Left lung (tissue), 14 donors: ENCODE measurements at regions of chr15 and their contacts with region 1.

Region 1: GRCh38 chr15:53448232-53449001 is 311.0 kb downstream of the WDR72 start:
- DNase-seq: no peak
- ATAC-seq: no peak
- H3K4me3 ChIP-seq: no peak overlapping the region
- H3K27ac ChIP-seq: no peak overlapping the region
- H3K4me1 ChIP-seq: no peaks in the 10 kb centered on the region
- H3K27me3 ChIP-seq: no peaks in the 10 kb centered on the region
- CTCF ChIP-seq: no peak

Region 2: DNA sequence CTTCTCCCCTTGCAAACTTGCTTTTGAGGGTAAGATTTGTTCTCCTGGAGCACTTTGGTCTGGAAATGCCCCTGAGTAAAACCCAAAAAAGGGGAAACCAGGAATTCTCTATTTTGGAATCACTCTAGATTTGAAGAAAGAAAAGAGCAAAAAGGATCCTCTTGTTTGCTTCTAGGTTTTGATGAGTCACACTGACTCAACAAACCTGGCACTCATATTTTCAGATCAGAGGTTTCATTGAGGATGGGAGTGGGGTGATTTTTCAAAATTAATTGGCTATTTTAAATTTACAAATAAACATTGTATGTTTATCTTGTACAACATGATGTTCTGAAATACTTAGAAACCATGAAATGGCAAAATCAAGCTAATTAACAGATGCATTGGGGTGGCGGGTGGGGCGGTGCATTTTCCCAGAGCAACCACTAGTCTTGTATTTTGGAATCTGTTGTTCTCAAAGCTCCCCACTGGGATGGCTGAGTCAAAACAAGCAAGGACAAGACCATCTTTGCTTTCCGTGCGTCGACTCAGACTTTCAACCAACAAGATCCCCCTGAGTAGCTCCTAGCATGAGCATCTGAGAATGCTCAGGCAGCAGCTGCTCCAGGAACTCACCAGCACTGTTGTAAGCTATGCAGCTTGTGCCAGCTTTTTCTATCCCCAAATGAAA is 140.3 kb before region 1 on chr15:
- intact Hi-C with region 1: no loop called
- DNase-seq: no peak
- ATAC-seq: no peak
- H3K4me3 ChIP-seq: no peak overlapping the region
- H3K27ac ChIP-seq: no peak overlapping the region
- H3K4me1 ChIP-seq: no peaks in the 10 kb centered on the region
- H3K27me3 ChIP-seq: no peaks in the 10 kb centered on the region
- CTCF ChIP-seq: no peak

Region 3: DNA sequence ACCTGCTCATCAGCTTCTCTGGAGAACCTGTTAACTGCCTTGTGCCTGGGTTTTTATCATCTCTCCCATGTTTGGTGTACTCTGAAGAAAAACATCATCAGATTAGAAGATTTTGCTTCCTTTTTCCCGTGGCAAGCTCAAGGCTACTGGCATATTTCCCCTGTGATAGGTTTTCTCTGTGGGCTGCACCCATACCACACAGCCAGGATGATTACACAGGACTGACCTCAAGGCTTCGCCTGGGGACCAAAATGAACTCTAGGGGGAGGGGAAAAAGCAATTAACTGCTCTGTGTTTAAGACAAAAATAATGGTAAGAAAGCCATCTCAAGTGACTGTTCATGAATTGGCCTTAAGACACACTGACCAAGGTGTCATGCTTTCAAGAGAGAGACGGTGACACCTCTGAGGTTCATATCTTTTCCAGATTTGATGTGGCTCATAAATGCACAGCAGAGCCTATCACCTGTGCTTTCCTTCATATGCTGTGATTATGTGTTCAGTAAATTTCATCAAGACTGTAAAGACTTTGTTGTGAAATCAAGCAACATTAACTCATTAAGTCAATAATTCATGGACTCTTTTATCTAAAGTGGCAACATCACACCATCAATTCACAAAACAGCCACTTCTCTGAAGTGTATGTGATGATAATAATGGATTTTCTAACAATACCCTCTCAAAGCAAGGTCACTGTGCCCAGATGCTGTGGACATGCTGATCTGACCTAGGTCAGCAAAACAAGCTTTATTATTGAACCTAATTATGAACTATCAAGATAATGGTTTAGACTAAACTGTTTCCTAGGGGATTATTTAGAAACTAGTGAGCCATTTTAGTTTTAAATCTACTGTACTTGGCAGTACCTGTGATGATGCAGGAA is 116.8 kb before region 1 on chr15:
- intact Hi-C with region 1: no loop called
- DNase-seq: no peak
- ATAC-seq: no peak
- H3K4me3 ChIP-seq: no peak overlapping the region
- H3K27ac ChIP-seq: no peak overlapping the region
- H3K4me1 ChIP-seq: no peaks in the 10 kb centered on the region
- H3K27me3 ChIP-seq: no peaks in the 10 kb centered on the region
- CTCF ChIP-seq: no peak

Region 4: DNA sequence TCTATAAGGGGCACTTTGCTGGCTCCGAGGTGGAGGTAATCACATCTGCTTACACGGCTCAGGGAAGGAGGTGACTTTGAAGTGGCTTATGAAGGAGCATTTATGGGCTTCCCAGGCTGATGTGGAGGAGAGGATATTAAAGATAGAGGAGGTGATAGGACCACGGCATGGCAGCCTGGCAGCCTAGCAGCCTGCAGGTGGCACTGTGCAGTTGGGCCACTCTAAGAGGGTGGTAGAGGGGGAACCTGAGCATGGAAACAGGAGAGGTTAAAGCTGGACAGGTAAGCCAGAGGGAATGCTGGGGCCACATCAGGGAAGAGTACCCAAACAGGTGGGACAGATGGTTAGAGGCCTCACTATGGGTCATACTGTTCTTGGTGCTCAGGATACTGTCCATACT is 64.0 kb before region 1 on chr15:
- intact Hi-C with region 1: loop called in 1 of 2 experiments (anchors 10 kb)
- DNase-seq: peak in 1 of 4 donors; percentile 44
- ATAC-seq: peak; percentile 52
- H3K4me3 ChIP-seq: no peak overlapping the region
- H3K27ac ChIP-seq: no peak overlapping the region
- H3K4me1 ChIP-seq: no peaks in the 10 kb centered on the region
- H3K27me3 ChIP-seq: no peaks in the 10 kb centered on the region
- CTCF ChIP-seq: no peak

Region 5: DNA sequence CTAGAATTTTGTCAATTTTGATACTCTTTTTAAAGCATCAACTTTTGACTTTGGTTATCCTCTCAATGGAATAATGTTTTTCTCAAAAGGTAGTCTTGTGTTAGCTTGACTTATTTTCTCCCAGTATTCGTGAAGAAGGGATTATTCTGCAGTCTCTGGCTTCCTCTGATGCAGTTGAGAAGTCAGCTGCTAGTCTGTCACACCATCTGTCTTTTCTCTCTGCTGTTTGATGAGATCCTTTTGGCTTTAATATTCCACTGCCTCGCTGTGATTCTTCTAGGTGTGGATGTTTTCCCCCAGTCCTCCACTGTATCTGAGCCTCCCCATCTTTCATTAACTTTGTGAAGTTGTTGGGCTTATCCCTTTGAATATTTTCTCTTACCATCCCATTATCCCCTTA is 170.0 kb after region 1 on chr15:
- intact Hi-C with region 1: no loop called
- DNase-seq: no peak
- ATAC-seq: no peak
- H3K4me3 ChIP-seq: no peak overlapping the region
- H3K27ac ChIP-seq: no peak overlapping the region
- H3K4me1 ChIP-seq: no peaks in the 10 kb centered on the region
- H3K27me3 ChIP-seq: no peaks in the 10 kb centered on the region
- CTCF ChIP-seq: no peak